ENCODE measurements at regions of chr22 and their contacts with region 1.

Region 1: DNA sequence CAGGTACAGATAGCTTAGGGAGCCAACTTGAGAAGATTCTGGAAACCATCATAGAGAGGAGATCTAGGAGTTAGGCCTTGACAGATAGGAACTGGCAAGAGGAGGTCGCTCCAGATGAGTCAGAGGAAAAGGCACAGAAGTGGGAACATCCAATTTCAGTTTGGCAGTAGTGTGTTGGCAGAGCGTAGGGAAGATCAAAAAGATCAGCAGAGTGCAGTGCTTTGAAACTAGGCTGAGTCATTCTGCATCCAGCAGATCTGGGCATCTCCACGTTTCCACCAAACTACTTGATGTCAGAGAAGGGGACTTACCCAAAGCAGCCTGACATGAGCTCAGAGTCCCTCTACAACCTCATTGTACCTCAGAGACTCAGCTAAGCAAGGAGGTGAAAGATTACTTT is 58.5 kb downstream of the GAB4 start:
- DNase-seq: no peak
- H3K4me3 ChIP-seq: no peak overlapping the region
- H3K27ac ChIP-seq: no peak overlapping the region
- H3K4me1 ChIP-seq: no peaks in the 10 kb centered on the region
- H3K27me3 ChIP-seq: no peaks in the 10 kb centered on the region
- CTCF ChIP-seq: no peak
- EP300 ChIP-seq: no peak
- POLR2A ChIP-seq: no peak

Region 2: DNA sequence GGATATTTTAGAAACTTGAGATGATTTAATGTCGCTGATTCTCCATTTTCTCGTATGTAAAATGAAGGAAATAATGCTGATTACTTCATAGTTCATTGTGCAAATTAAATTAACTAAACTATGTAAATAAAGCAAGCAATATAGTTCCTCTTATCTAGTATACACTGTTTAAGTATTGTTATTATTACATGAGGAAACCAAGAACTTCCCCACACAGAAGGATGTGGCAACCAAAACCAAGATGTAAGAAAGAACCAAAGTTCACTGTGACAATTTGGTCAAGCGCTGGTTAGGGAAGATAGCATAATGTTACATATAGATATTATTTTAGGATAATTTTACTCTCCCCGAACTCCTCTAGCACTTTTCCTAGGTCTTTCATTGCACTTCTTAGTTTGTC is 227.6 kb before region 1 on chr22:
- in situ Hi-C with region 1: no loop called
- intact Hi-C with region 1: loop called (anchors 5 kb)
- DNase-seq: no peak
- H3K4me3 ChIP-seq: no peak overlapping the region
- H3K27ac ChIP-seq: no peak overlapping the region
- H3K4me1 ChIP-seq: no peaks in the 10 kb centered on the region
- H3K27me3 ChIP-seq: peaks cover 10% of the 10 kb centered on the region
- CTCF ChIP-seq: no peak
- EP300 ChIP-seq: no peak
- POLR2A ChIP-seq: no peak

Region 3: DNA sequence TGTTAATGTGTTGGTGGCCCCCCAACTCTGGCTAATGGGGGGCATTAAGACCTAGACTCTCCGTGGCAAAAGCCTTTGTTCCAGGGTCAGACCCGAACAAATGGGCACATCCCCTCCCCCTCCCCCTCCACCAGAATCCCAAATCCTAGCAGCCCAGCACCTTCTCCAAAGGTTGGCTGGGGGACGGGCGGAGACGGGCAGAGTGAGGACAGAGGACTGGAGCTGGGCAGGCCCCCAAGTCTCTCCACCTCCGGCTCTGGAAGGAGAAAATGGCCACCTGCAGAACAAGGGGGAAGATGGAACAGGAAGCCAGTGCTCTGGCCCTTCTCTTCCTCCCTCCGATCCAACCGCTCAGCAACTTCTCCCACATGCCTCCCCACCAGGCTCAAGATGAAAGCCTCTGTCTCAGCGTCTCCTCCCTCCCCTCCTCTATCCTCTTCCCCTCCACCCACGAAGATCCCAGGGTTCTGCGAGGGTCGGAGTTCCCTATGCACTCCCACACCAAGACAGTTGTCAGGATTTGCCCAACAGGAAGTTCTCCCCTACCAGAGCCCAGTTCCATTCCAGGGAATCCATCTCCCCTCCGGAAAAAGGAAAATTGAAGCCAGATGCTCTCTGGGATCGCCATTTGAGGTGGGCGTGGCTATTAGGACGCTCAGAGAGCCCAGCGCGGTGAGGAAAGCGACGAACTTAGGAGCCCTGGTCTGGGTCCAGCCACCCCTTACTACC is 249.6 kb after region 1 on chr22:
- in situ Hi-C with region 1: no loop called
- intact Hi-C with region 1: no loop called
- DNase-seq: no peak
- H3K4me3 ChIP-seq: peak overlapping the region in 2 of 4 donors; percentile 14 to 34
- H3K27ac ChIP-seq: peak overlapping the region in 2 of 4 donors; percentile 17 to 58
- H3K4me1 ChIP-seq: no peaks in the 10 kb centered on the region
- H3K27me3 ChIP-seq: no peaks in the 10 kb centered on the region
- CTCF ChIP-seq: no peak
- EP300 ChIP-seq: no peak
- POLR2A ChIP-seq: no peak

Measured in transverse colon (tissue), 4 donors.